Endothelial cell of umbilical vein (primary cell): ENCODE measurements at regions of chr17 and their contacts with region 1.

Region 1: GRCh38 chr17:51046514-51047384 is 73.9 kb downstream of the SPAG9 start:
- DNase-seq: peak; percentile 72
- H3K4me3 ChIP-seq: no peak overlapping the region
- H3K27ac ChIP-seq: no peak overlapping the region
- H3K4me1 ChIP-seq: no peaks in the 10 kb centered on the region
- H3K27me3 ChIP-seq: no peaks in the 10 kb centered on the region
- CTCF ChIP-seq: no peak
- POLR2A ChIP-seq: no peak

Region 2: GRCh38 chr17:51029568-51030463 is 16.9 kb before region 1 on chr17:
- CTCF ChIA-PET with region 1: interaction called, 4 read pairs
- POLR2A ChIA-PET with region 1: no interaction called
- dilution Hi-C with region 1: no loop called
- intact Hi-C with region 1: loop called (anchors 2 kb)
- DNase-seq: peak; percentile 61
- H3K4me3 ChIP-seq: peak overlapping the region in 1 of 3 experiments; percentile 19
- H3K27ac ChIP-seq: no peak overlapping the region
- H3K4me1 ChIP-seq: no peaks in the 10 kb centered on the region
- H3K27me3 ChIP-seq: no peaks in the 10 kb centered on the region
- CTCF ChIP-seq: no peak
- POLR2A ChIP-seq: no peak

Region 3: DNA sequence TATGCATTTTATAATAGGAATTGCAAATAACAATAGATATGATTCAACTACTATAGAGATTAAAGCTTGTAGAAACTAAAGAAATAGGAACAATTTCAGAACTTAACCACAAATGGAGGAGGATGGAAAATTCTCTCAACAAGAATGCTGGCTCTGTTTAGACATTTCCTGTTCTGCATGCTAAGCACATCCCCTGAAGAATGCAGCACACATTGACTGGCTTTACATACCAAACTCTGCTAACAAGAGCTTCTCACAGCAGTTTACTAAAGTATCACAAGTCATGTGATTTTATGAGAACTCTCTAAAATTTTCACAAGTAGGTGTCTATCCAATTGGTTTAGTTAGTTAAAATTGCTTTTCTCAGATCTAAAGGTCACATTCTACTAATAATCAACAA is 11.3 kb before region 1 on chr17:
- CTCF ChIA-PET with region 1: interaction called, 10 read pairs
- POLR2A ChIA-PET with region 1: no interaction called
- dilution Hi-C with region 1: no loop called
- intact Hi-C with region 1: loop called (anchors 2 kb)
- DNase-seq: peak; percentile 68
- H3K4me3 ChIP-seq: no peak overlapping the region
- H3K27ac ChIP-seq: no peak overlapping the region
- H3K4me1 ChIP-seq: peaks cover 3% of the 10 kb centered on the region
- H3K27me3 ChIP-seq: no peaks in the 10 kb centered on the region
- CTCF ChIP-seq: no peak
- POLR2A ChIP-seq: no peak